ENCODE measurements at regions of chr1 and their contacts with region 1.

Region 1: DNA sequence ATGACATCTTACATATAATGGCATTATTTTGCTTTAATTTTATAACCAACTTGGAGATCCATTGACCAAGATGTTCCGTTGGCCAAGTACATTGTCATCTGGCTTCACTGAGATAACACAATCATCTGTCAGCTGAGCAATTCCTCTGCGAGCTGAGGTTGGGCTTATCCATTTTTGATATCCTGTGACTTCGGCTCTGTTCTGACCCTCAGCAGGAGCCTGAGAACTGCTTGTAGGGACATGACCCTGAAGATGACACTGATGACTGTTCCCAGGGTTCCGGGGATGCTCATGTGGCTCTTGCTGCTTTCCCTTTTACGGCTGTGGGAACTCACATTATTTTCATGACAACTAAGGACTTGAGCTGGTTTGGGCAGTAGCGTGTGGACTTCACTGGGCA is 51.2 kb downstream of the TLR5 start:
- DNase-seq: no peak
- H3K4me3 ChIP-seq: no peak overlapping the region
- H3K27ac ChIP-seq: no peak overlapping the region
- H3K4me1 ChIP-seq: peaks cover 0 to 5% (median 0%) of the 10 kb centered on the region in 6 donors
- H3K27me3 ChIP-seq: peaks cover 0 to 7% (median 0%) of the 10 kb centered on the region in 7 donors
- CTCF ChIP-seq: no peak
- POLR2A ChIP-seq: no peak

Region 2: GRCh38 chr1:222465211-222466041 is 626.5 kb before region 1 on chr1:
- intact Hi-C with region 1: loop called (anchors 10 kb)
- DNase-seq: peak; percentile 97
- H3K4me3 ChIP-seq: peak overlapping the region; percentile 38 to 72 (median 50)
- H3K27ac ChIP-seq: peak overlapping the region; percentile 85 to 91 (median 88)
- H3K4me1 ChIP-seq: peaks cover 3 to 23% (median 17%) of the 10 kb centered on the region in 6 donors
- H3K27me3 ChIP-seq: peaks cover 0 to under 1% (median 0%) of the 10 kb centered on the region in 7 donors
- CTCF ChIP-seq: peak; percentile 97 to 100 (median 99)
- POLR2A ChIP-seq: no peak